ENCODE measurements at regions of chr11 and their contacts with region 1.

Region 1: DNA sequence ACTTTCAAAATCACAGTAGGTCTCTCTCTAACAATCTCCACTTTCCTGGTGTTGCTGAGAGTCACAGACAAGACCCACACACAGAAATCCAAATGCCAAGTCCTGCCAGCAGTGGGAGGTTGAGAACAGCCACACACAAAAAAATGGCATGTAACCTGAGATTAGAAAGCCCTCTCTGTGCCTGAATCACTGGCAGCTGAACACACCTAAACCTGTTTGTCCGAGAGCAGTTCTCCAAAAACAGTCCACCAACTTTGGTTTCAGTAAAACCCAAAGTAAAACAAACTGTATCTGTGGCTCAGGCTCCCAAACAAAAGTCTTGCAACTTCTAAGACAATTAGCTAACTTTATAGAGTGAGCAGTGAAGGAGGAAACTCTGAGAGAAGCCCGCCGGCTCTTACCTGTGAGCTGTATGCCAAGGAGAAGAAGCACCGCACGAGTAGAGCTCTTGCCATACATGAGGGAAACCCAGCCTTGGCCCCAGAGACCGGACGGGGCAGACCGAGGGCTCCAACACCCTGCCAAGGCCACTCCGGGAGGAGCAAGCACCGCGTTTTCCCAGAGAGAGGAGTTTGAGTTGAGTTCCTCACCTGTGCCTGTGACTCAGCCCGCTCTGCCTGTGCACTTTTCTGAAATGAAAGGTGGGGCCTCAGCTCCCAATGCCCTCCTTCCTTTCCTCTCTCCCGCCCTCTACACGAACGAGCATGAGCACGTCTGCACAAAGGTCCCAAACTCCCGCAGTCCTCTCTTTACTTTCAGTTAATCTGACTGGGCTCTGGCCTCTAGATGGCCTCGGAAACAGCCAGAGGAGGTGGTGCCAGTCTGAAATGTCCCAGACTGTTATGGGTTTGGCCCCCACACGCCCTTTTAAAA is at the start of gene MPZL2:
- DNase-seq: no peak
- ATAC-seq: peak; percentile 87
- H3K4me3 ChIP-seq: peak within 1 kb of the TSS; percentile 25 to 27
- H3K27ac ChIP-seq: peak within 1 kb of the TSS; percentile 45
- H3K4me1 ChIP-seq: peaks cover 8% of the 10 kb centered on the region; the same call in 1 of the 2 replicates
- H3K27me3 ChIP-seq: peaks cover 22% of the 10 kb centered on the region
- CTCF ChIP-seq: no peak
- total RNA-seq, gene MPZL2: 1.8 TPM

Region 2: DNA sequence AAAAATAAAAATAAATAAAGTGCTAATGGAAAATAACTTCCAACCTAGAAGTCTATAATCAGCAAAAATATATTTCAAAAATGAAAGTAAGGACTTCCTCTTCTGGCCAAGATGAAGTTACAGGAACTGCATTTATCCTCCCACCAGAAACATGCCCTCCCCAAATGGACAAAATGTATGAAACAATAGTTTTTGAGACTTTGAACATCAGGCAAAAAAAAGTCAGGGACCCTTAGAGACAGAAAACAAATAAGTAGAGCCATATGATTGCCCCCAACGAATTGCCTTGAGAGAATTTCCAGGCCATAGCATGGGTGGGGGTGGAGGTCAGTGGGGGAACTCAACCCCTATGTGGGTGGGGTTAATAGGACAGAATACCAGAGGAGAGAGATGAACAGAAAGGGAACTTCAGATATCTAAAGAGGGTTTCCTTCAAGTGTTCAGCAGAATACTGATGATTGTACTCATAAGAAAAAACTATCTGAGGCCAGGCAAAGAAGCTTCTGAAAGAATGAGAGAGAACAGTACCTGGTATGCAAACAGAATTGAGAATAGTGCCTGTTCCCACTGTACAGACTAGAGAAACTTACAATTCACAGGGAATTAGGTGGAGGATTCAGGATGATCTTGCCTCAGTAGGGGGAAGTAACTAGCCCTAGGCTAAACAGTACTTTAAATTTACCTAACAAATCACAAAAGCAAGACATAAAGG is 304.3 kb before region 1 on chr11:
- CTCF ChIA-PET with region 1: interaction called, 15 read pairs
- POLR2A ChIA-PET with region 1: no interaction called
- in situ Hi-C with region 1: no loop called
- intact Hi-C with region 1: no loop called
- DNase-seq: no peak
- ATAC-seq: no peak
- H3K4me3 ChIP-seq: no peak overlapping the region
- H3K27ac ChIP-seq: no peak overlapping the region
- H3K4me1 ChIP-seq: no peaks in the 10 kb centered on the region
- H3K27me3 ChIP-seq: peaks cover 6% of the 10 kb centered on the region
- CTCF ChIP-seq: no peak

Region 3: DNA sequence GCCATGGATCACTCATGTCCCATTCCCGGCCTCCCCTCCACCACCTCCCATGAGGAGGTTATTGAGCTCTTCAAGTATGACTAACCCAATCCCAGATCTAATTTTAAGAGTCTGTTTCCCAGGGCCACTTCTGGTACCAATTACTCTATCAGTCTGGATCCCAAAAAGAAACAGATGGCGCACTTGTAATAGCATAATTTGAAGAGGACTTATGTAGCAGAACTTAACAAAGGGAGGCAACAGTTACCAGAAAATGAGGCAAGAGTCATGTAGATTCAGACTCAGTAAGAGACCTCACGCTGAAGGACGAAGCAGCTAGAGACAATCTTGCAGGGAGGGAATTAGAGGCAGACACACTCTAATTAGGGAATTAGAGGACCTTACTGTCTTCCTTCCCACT is 480.1 kb after region 1 on chr11:
- CTCF ChIA-PET with region 1: no interaction called
- POLR2A ChIA-PET with region 1: interaction called, 11 read pairs
- in situ Hi-C with region 1: no loop called
- intact Hi-C with region 1: no loop called
- DNase-seq: no peak
- ATAC-seq: no peak
- H3K4me3 ChIP-seq: no peak overlapping the region
- H3K27ac ChIP-seq: no peak overlapping the region
- H3K4me1 ChIP-seq: no peaks in the 10 kb centered on the region
- H3K27me3 ChIP-seq: no peaks in the 10 kb centered on the region
- CTCF ChIP-seq: no peak

Measured in Panc1 (cell line).